ENCODE measurements at regions of chr11 and their contacts with region 1.

Region 1: GRCh38 chr11:67382276-67383136 is 9.1 kb upstream of the CLCF1 start:
- DNase-seq: peak; percentile 88 to 92
- H3K4me3 ChIP-seq: no peak overlapping the region
- H3K27ac ChIP-seq: no peak overlapping the region
- H3K4me1 ChIP-seq: peaks cover 4 to 41% (median 7%) of the 10 kb centered on the region in 4 donors
- H3K27me3 ChIP-seq: peaks cover 0 to 5% (median 0%) of the 10 kb centered on the region in 3 donors
- CTCF ChIP-seq: peak in 5 of 7 experiments; percentile 86 to 98 (median 91)
- EP300 ChIP-seq: no peak
- POLR2A ChIP-seq: no peak

Region 2: DNA sequence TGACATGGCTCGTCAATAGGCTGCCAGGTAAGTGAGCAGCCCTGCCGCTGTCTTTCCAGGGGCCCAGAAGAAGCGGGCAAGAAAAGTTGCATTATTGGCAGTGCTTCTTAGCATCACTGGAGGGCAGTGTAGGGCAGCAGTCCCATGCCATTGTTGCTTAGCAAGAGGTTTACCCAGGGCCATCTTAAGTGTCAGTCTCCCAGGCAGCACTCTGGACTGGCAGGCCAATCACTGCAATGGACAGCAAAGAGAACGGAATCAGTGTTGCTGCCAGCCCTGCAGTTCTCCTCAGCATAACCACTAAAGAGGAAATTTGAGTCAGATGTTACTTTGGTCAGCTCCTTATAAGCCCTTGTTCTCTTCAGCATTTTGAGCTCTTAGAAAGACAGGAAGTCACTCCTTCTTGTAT is 129.7 kb before region 1 on chr11:
- intact Hi-C with region 1: loop called (anchors 10 kb)
- DNase-seq: peak in 1 of 2 donors; percentile 81
- H3K4me3 ChIP-seq: no peak overlapping the region
- H3K27ac ChIP-seq: peak overlapping the region in 3 of 5 donors; percentile 1 to 28 (median 6)
- H3K4me1 ChIP-seq: peaks cover 0 to 43% (median 13%) of the 10 kb centered on the region in 4 donors
- H3K27me3 ChIP-seq: no peaks in the 10 kb centered on the region
- CTCF ChIP-seq: peak in 1 of 7 experiments; percentile 18
- EP300 ChIP-seq: no peak
- POLR2A ChIP-seq: no peak

Region 3: DNA sequence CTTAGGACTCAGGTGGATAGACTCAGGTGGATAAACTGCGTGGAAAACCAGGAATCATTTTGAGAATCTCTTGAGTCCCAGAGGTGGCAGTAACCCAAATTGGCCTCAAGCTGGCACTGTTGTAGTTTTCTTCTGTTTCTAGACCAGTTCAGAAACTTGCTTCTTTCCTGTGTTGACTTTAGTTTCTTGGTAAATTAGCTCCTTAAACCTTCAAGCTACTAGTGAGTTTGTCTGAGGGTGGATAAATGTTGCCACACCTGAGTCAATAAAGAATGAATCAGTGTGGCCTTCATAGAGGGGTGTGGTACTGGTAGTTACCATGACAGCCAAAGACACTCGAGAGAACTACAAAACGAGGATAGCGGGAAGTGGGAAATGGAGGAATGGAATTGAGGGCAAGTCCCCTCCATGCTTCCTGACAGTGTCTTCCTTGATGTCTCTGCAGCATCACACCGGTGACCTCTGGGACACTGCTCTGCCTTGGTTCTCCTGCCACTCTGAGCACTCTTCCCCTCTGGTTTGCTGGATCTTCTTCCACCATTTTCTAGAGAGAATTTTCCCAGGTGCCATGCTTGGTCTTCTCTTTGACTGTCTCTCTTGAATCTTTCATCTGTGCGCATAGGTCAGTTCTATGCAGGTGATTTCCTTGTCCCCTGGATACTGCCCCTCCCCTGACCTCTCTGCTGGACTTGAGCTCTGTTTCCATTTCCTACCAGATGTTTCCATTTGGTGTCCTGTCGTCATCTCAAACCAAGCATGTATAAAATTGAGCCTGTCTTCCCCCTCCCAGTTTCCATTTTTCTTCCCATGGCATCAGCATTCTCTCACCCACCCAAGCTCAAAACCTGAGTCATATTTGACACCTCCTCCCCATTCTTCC is 36.3 kb before region 1 on chr11:
- intact Hi-C with region 1: loop called (anchors 5 kb)
- DNase-seq: peak; percentile 68 to 89
- H3K4me3 ChIP-seq: no peak overlapping the region
- H3K27ac ChIP-seq: peak overlapping the region; percentile 41 to 70 (median 62)
- H3K4me1 ChIP-seq: peaks cover 17 to 56% (median 36%) of the 10 kb centered on the region in 4 donors
- H3K27me3 ChIP-seq: no peaks in the 10 kb centered on the region
- CTCF ChIP-seq: peak in 5 of 7 experiments; percentile 46 to 69 (median 52)
- EP300 ChIP-seq: no peak
- POLR2A ChIP-seq: no peak